HCT116 (cell line): ENCODE measurements at regions of chr9 and their contacts with region 1.

Region 1: GRCh38 chr9:75866273-75866871 is 24.1 kb upstream of the PCSK5 start:
- DNase-seq: peak; percentile 48
- ATAC-seq: peak; percentile 62; the same call in 1 of the 2 replicates
- H3K4me3 ChIP-seq: no peak overlapping the region
- H3K27ac ChIP-seq: no peak overlapping the region
- H3K4me1 ChIP-seq: no peaks in the 10 kb centered on the region
- H3K27me3 ChIP-seq: no peaks in the 10 kb centered on the region
- CTCF ChIP-seq: peak; percentile 38 to 75 (median 67); a peak in 5 of 6 replicates
- POLR2A ChIP-seq: no peak
- RAD21 ChIP-seq: peak; percentile 51

Region 2: DNA sequence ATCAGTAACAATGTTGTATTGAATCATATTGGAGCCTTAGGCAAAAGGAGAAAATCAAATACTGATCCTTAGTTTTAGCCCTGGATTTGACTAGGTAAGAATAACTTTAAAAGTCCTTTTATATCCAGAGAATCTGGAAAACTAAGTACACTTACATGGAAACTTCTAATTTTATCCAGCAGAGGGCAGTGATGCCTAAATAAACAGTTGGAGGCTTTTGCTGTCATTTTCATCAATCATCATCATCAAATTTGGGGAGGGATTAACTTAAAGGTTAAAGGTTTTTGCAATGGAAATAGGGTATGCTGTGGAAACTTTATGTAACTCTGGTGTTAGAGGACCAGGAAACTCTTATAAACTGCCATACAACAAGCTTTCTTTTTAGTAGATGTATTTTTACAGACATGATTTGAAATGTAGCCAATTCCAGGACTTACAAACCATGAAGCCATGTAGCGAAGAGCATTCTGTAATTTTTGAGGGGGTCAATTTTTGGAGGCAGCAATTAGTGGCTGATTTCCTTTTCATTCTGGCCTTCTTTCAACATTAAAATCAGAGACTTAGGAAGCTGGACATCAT is 665.4 kb before region 1 on chr9:
- CTCF ChIA-PET with region 1: no interaction called
- POLR2A ChIA-PET with region 1: no interaction called
- RAD21 ChIA-PET with region 1: no interaction called
- intact Hi-C with region 1: loop called (anchors 2 kb)
- DNase-seq: peak; percentile 61
- ATAC-seq: peak; percentile 55
- H3K4me3 ChIP-seq: no peak overlapping the region
- H3K27ac ChIP-seq: no peak overlapping the region
- H3K4me1 ChIP-seq: no peaks in the 10 kb centered on the region
- H3K27me3 ChIP-seq: no peaks in the 10 kb centered on the region; the same call in none of the 2 replicates
- CTCF ChIP-seq: peak; percentile 45 to 76 (median 76); a peak in 5 of 6 replicates
- POLR2A ChIP-seq: no peak
- RAD21 ChIP-seq: peak; percentile 78

Region 3: DNA sequence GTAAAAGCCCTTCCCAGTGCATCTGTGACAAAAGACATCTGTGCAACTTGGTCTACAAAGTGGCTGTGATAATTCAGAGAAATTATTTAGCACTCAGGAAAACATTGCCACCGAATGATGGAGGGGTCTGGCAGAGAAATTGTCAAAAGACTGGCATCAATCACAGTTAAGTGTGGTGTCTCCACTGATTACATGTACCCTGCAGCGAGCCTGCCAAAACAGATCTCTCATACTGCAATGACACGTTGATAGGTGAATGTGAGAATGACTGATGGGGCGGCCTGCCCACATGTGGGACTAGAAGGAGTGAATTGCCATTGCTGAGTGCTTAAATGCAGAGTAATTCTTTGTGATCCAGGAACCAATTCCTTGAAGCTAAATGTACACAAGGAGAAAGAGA is 112.3 kb before region 1 on chr9:
- CTCF ChIA-PET with region 1: no interaction called
- POLR2A ChIA-PET with region 1: no interaction called
- RAD21 ChIA-PET with region 1: no interaction called
- intact Hi-C with region 1: no loop called
- DNase-seq: no peak
- ATAC-seq: no peak
- H3K4me3 ChIP-seq: no peak overlapping the region
- H3K27ac ChIP-seq: no peak overlapping the region
- H3K4me1 ChIP-seq: no peaks in the 10 kb centered on the region
- H3K27me3 ChIP-seq: peaks cover 4% of the 10 kb centered on the region; the same call in 1 of the 2 replicates
- CTCF ChIP-seq: no peak
- POLR2A ChIP-seq: no peak
- RAD21 ChIP-seq: no peak

Region 4: DNA sequence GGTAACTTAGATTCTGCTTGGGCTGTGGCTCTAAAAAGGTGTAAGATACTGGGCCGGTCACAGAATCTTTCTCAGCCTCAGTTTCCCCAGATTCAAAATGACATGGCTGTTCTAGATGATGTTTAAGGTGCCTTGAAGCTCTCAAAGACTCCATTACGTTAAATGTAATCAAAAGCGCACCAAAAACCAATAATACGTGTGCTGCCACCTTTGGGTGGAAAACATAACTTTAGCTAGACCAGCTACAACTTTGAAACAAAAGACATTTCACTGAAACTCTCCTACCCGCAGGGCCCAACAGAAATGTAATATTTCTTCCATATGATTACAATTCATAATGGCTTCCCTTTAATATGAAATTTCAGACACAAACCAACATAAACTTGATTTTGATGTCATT is 10.9 kb before region 1 on chr9:
- CTCF ChIA-PET with region 1: interaction called, 18 read pairs
- POLR2A ChIA-PET with region 1: no interaction called
- RAD21 ChIA-PET with region 1: no interaction called
- intact Hi-C with region 1: no loop called
- DNase-seq: peak; percentile 18
- ATAC-seq: peak; percentile 63
- H3K4me3 ChIP-seq: no peak overlapping the region
- H3K27ac ChIP-seq: no peak overlapping the region
- H3K4me1 ChIP-seq: no peaks in the 10 kb centered on the region
- H3K27me3 ChIP-seq: 0 out of 2 replicates have a peak, but pooled peaks cover 4% of the 10 kb centered on the region
- CTCF ChIP-seq: peak; percentile 38 to 59 (median 49); a peak in 5 of 6 replicates
- POLR2A ChIP-seq: no peak
- RAD21 ChIP-seq: peak; percentile 62

Region 5: DNA sequence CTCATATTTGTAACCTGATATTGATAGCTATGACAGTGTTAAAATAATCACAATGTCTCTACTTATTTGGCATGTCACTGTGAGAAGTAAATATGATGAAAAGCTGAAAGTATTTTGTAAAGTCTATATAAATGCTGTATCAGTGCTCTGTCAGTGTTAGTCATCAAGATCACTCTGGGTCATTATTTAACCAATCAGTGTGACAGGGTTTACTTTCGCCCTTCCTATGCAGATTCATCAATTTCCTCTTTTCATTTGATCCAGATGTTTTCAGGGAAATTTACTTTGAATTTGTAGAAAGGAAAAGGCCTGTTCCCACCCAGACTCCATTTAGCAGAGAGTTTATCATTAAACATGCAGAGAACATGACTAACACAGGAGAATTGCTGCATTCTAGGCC is 14.2 kb after region 1 on chr9:
- CTCF ChIA-PET with region 1: interaction called, 14 read pairs
- POLR2A ChIA-PET with region 1: no interaction called
- RAD21 ChIA-PET with region 1: interaction called in 1 of 2 experiments, 3 read pairs
- intact Hi-C with region 1: no loop called
- DNase-seq: no peak
- ATAC-seq: no peak
- H3K4me3 ChIP-seq: no peak overlapping the region
- H3K27ac ChIP-seq: no peak overlapping the region
- H3K4me1 ChIP-seq: no peaks in the 10 kb centered on the region
- H3K27me3 ChIP-seq: no peaks in the 10 kb centered on the region
- CTCF ChIP-seq: no peak
- POLR2A ChIP-seq: no peak
- RAD21 ChIP-seq: no peak